ENCODE measurements at regions of chr1 and their contacts with region 1.

Region 1: DNA sequence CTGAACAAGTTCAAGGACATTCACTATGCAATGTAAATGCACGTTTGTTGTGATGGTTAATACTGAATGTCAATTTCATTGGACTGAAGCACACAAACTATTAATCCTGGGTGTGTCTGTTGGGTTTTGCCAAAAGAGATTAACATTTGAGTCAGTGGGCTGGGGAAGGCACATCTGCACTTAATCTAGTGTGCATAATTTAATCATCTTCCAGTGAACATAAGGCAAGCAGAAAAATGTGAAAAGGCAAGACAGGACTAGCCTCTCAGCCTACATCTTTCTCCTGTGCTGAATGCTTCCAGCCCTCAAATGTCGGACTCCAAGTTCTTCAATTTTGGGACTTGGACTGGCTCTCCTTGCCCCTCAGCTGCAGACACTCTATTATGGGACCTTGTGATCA is 40.1 kb downstream of the PRPF38A start:
- DNase-seq: no peak
- ATAC-seq: no peak
- H3K4me3 Mint-ChIP-seq: no peak overlapping the region
- H3K27ac Mint-ChIP-seq: no peak overlapping the region
- H3K4me1 Mint-ChIP-seq: peaks cover 0 to 3% (median 1%) of the 10 kb centered on the region in 4 donors
- H3K27me3 Mint-ChIP-seq: no peaks in the 10 kb centered on the region

Region 2: GRCh38 chr1:52306227-52307006 is 138.0 kb before region 1 on chr1:
- POLR2A ChIA-PET with region 1: no interaction called
- DNase-seq: no peak
- ATAC-seq: no peak
- H3K4me3 Mint-ChIP-seq: no peak overlapping the region
- H3K27ac Mint-ChIP-seq: no peak overlapping the region
- H3K4me1 Mint-ChIP-seq: no peaks in the 10 kb centered on the region
- H3K27me3 Mint-ChIP-seq: no peaks in the 10 kb centered on the region

Region 3: DNA sequence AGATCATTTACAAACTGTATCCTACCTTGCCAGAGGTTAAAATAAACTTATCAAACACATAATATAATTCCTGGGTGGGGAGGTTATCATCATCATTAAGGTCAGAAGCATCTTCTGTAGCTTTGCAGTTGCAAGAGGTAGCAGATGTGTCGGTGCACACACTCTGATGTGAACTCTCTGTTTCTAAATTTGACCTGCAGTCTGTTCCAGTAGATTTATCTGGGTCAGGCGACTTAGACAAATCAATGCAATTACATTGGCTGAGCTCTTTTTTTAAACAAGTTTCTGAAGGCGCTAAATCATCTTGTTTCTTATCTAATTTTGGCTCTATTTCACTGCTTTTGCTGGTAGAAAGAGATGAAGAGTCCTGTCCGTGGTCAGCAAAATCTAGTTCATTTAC is 30.3 kb after region 1 on chr1:
- POLR2A ChIA-PET with region 1: interaction called, 10 read pairs
- DNase-seq: no peak
- ATAC-seq: no peak
- H3K4me3 Mint-ChIP-seq: no peak overlapping the region
- H3K27ac Mint-ChIP-seq: peak overlapping the region in 5 of 10 donors; percentile 11 to 47 (median 40)
- H3K4me1 Mint-ChIP-seq: peaks cover 0 to 10% (median 6%) of the 10 kb centered on the region in 4 donors
- H3K27me3 Mint-ChIP-seq: no peaks in the 10 kb centered on the region

Measured in naive thymus-derived CD8-positive, alpha-beta T cell (primary cell).